Naive thymus-derived CD4-positive, alpha-beta T cell (primary cell): ENCODE measurements at regions of chr7 and their contacts with region 1.

Region 1: DNA sequence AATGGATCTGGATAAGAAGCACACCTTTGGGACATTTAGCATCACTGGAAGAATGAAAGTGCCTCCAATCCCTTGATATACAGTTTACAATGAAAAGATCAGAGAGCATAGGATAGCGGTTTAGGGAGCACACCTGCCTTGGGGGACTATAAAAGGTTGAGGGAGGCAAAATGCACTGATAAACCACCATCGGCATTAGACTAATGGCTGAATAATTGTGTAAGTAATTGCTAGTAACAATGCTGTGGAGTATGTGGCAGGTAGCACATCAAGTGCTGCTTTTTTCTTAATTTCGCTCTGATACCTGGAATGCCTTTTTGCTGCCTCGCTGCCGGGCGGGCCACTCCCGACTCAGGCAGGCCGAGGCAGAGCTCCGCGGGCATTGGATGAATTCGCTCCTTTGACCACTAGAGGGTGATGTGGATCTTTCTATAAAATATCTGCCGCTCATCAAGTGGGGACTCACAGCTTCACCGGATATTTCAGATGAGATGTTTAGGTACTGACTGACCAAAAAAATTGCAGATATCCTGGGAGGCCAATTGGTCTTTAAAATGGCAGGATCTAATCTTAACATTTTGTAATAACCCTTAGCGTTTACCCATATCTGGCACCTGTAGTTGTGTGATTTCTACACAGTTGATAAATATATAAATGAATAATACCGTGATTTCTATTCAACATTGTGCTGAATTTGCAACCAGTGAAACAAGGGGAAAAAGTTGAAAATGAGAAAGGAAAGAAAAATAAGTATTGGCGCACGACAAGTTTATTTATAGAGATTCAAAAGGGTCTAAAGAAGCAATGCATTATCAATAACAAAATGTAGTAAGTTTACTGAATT is 116.8 kb upstream of the PRSS1 start:
- DNase-seq: peak; percentile 26 to 76 (median 63)
- ATAC-seq: peak; percentile 80
- H3K4me3 ChIP-seq: no peak overlapping the region
- H3K4me3 Mint-ChIP-seq: peak overlapping the region in 5 of 10 donors; percentile 6 to 63 (median 38)
- H3K27ac ChIP-seq: no peak overlapping the region
- H3K27ac Mint-ChIP-seq: peak overlapping the region in 7 of 9 donors; percentile 13 to 84 (median 46)
- H3K4me1 ChIP-seq: no peaks in the 10 kb centered on the region
- H3K4me1 Mint-ChIP-seq: peaks cover 4 to 17% (median 11%) of the 10 kb centered on the region in 7 donors
- H3K27me3 ChIP-seq: no peaks in the 10 kb centered on the region
- H3K27me3 Mint-ChIP-seq: peaks cover 0 to 15% (median 0%) of the 10 kb centered on the region in 5 donors

Region 2: GRCh38 chr7:142603870-142604448 is 28.6 kb before region 1 on chr7:
- CTCF ChIA-PET with region 1: interaction called, 5 read pairs
- POLR2A ChIA-PET with region 1: no interaction called
- intact Hi-C with region 1: loop called in 1 of 2 experiments (anchors 2 kb)
- DNase-seq: peak in 8 of 9 donors; percentile 34 to 67 (median 56)
- ATAC-seq: peak; percentile 82
- H3K4me3 ChIP-seq: no peak overlapping the region
- H3K4me3 Mint-ChIP-seq: peak overlapping the region in 9 of 10 donors; percentile 38 to 66 (median 55)
- H3K27ac ChIP-seq: no peak overlapping the region
- H3K27ac Mint-ChIP-seq: peak overlapping the region in 6 of 9 donors; percentile 3 to 90 (median 58)
- H3K4me1 ChIP-seq: no peaks in the 10 kb centered on the region
- H3K4me1 Mint-ChIP-seq: peaks cover 0 to 18% (median 12%) of the 10 kb centered on the region in 7 donors
- H3K27me3 ChIP-seq: no peaks in the 10 kb centered on the region
- H3K27me3 Mint-ChIP-seq: peaks cover 0 to 19% (median 0%) of the 10 kb centered on the region in 5 donors

Region 3: GRCh38 chr7:142711746-142712619 is 79.5 kb after region 1 on chr7:
- CTCF ChIA-PET with region 1: interaction called, 4 read pairs
- POLR2A ChIA-PET with region 1: interaction called, 4 read pairs
- intact Hi-C with region 1: loop called in 1 of 2 experiments (anchors 1 kb)
- DNase-seq: no peak
- ATAC-seq: peak; percentile 75
- H3K4me3 ChIP-seq: peak overlapping the region; percentile 46
- H3K4me3 Mint-ChIP-seq: peak overlapping the region; percentile 76 to 94 (median 88)
- H3K27ac ChIP-seq: peak overlapping the region; percentile 62
- H3K27ac Mint-ChIP-seq: peak overlapping the region; percentile 81 to 96 (median 91)
- H3K4me1 ChIP-seq: peaks cover 31 to 50% of the 10 kb centered on the region in 2 donors
- H3K4me1 Mint-ChIP-seq: peaks cover 20 to 76% (median 63%) of the 10 kb centered on the region in 7 donors
- H3K27me3 ChIP-seq: no peaks in the 10 kb centered on the region
- H3K27me3 Mint-ChIP-seq: peaks cover 0 to 1% (median 0%) of the 10 kb centered on the region in 5 donors

Region 4: GRCh38 chr7:142788303-142789289 is 156.1 kb after region 1 on chr7:
- CTCF ChIA-PET with region 1: interaction called, 30 read pairs
- POLR2A ChIA-PET with region 1: interaction called, 39 read pairs
- intact Hi-C with region 1: loop called (anchors 1 kb)
- DNase-seq: peak in 5 of 9 donors; percentile 7 to 33 (median 18)
- ATAC-seq: no peak
- H3K4me3 ChIP-seq: peak overlapping the region; percentile 96
- H3K4me3 Mint-ChIP-seq: peak overlapping the region; percentile 91 to 100 (median 98)
- H3K27ac ChIP-seq: peak overlapping the region; percentile 98
- H3K27ac Mint-ChIP-seq: peak overlapping the region; percentile 95 to 100 (median 99)
- H3K4me1 ChIP-seq: peaks cover 14 to 19% of the 10 kb centered on the region in 2 donors
- H3K4me1 Mint-ChIP-seq: peaks cover 13 to 28% (median 21%) of the 10 kb centered on the region in 7 donors
- H3K27me3 ChIP-seq: no peaks in the 10 kb centered on the region
- H3K27me3 Mint-ChIP-seq: peaks cover 0 to 3% (median 0%) of the 10 kb centered on the region in 5 donors

Region 5: GRCh38 chr7:142866361-142867058 is 234.0 kb after region 1 on chr7:
- CTCF ChIA-PET with region 1: interaction called, 4 read pairs
- POLR2A ChIA-PET with region 1: no interaction called
- intact Hi-C with region 1: loop called in 1 of 2 experiments (anchors 2 kb)
- DNase-seq: peak in 4 of 9 donors; percentile 7 to 27 (median 13)
- ATAC-seq: peak; percentile 52
- H3K4me3 ChIP-seq: no peak overlapping the region
- H3K4me3 Mint-ChIP-seq: peak overlapping the region in 1 of 10 donors; percentile 20
- H3K27ac ChIP-seq: no peak overlapping the region
- H3K27ac Mint-ChIP-seq: peak overlapping the region in 4 of 9 donors; percentile 32 to 76 (median 50)
- H3K4me1 ChIP-seq: no peaks in the 10 kb centered on the region
- H3K4me1 Mint-ChIP-seq: peaks cover 0 to 7% (median 4%) of the 10 kb centered on the region in 7 donors
- H3K27me3 ChIP-seq: no peaks in the 10 kb centered on the region
- H3K27me3 Mint-ChIP-seq: no peaks in the 10 kb centered on the region

Region 6: DNA sequence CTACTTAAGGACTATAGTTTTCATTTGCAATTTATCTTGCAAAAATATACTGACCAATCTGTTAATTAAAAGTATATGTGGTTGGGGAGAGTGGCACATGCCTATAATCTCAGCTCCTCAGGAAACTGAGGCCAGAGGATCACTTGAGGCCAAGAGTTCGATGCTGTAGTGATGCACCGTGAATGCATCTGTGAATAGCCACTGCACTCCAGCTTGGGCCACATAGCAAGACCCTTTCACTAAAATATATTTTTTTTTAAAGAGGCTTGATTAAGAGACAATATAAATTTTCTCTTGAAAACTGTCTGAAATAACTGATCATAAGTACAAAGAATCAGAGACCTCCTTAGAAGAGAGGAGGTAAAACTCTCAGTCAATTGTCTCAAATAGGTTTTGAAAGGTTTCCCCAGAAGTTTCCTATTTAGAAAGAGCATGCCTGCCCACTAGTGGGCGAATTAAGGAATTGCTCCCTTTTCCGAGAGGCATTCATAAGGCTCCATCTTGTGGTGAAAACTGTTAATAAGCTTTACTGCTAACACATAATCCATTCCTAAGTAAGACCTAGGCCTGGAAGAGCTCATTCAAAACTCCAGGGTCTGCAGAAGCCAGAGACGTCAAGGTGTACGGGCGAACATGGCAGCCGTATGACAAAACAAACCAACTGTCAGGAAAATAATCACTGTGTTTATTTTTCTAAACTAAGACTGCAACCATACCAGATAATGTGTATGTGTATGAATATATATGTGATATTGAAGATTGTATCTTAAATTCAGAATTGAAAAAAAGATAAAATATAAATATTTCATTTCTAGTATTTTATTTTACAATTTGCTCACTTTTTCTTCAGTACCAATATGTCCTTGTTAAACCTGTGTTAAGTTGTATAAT is 582.5 kb after region 1 on chr7:
- CTCF ChIA-PET with region 1: interaction called, 5 read pairs
- POLR2A ChIA-PET with region 1: no interaction called
- intact Hi-C with region 1: loop called (anchors 1 to 10 kb)
- DNase-seq: peak; percentile 26 to 81 (median 75)
- ATAC-seq: peak; percentile 99
- H3K4me3 ChIP-seq: no peak overlapping the region
- H3K4me3 Mint-ChIP-seq: no peak overlapping the region
- H3K27ac ChIP-seq: no peak overlapping the region
- H3K27ac Mint-ChIP-seq: peak overlapping the region in 1 of 9 donors; percentile 13
- H3K4me1 ChIP-seq: no peaks in the 10 kb centered on the region
- H3K4me1 Mint-ChIP-seq: no peaks in the 10 kb centered on the region
- H3K27me3 ChIP-seq: no peaks in the 10 kb centered on the region
- H3K27me3 Mint-ChIP-seq: peaks cover 0 to 21% (median 4%) of the 10 kb centered on the region in 5 donors